Psoas muscle (tissue), 8 donors: ENCODE measurements at regions of chr19 and their contacts with region 1.

Region 1: DNA sequence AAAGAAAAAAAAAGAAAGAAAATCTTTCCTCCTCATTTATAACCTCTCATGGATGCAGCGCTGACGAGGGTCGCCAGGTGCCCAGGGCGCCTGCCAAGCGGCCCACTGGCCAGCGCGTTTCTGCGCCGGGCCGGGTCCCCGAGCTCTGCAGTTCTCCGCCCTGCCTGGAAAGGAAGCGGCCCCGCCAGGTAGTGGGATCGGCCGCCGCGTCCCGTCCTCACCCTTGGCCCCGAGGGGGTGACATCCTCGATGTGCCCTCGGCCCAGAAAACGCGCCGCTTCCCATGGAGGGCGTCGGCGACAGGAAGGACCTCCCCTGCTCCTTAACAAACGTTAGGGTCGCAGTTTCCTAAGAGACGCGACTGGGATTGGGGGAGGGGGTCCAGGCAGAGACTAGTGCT is 56.9 kb downstream of the ZNF726 start:
- DNase-seq: no peak
- ATAC-seq: no peak
- H3K4me3 ChIP-seq: no peak overlapping the region
- H3K27ac ChIP-seq: no peak overlapping the region
- H3K4me1 ChIP-seq: no peaks in the 10 kb centered on the region
- H3K27me3 ChIP-seq: peaks cover 3 to 22% (median 9%) of the 10 kb centered on the region in 3 donors
- CTCF ChIP-seq: no peak

Region 2: DNA sequence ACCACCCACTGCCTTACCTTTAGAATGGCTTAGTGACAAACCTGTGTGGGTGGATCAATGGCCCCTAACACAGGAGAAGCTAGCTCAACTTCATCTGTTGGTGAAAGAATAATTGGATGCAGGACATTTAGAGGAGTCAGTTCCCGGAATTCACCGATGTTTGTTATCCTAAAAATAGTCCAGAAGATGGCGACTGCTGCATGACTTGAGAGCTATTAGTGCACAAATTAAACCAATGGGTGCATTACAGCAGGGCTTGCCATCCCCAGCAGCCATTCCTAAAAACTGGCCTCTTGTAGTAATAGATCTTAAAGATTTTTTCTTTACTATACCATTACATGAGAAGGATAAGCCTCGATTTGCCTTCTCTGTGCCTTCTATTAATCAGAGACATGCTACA is 103.7 kb before region 1 on chr19:
- intact Hi-C with region 1: loop called (anchors 2 kb)
- DNase-seq: no peak
- ATAC-seq: no peak
- H3K4me3 ChIP-seq: no peak overlapping the region
- H3K27ac ChIP-seq: no peak overlapping the region
- H3K4me1 ChIP-seq: no peaks in the 10 kb centered on the region
- H3K27me3 ChIP-seq: no peaks in the 10 kb centered on the region
- CTCF ChIP-seq: no peak

Region 3: DNA sequence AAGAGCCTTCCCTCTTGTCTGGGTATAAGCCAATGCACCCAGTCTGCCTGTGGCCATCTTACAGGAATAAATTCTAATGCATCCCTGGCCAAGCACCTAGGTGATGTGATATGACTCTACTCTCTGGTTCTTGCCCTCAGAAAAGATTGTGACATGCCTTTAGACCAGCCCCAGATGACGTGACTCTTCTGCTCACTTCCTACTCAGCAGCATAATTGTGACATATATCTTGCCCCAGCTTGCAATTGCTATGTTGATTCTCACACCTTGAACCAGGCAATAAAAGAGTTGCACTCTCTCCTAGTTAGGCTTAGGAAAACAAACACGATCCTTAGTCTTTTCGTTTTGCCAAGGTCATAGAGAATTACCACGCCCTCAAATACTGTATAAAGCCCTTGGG is 70.2 kb before region 1 on chr19:
- intact Hi-C with region 1: no loop called
- DNase-seq: no peak
- ATAC-seq: no peak
- H3K4me3 ChIP-seq: no peak overlapping the region
- H3K27ac ChIP-seq: no peak overlapping the region
- H3K4me1 ChIP-seq: no peaks in the 10 kb centered on the region
- H3K27me3 ChIP-seq: peaks cover 0 to 6% (median 0%) of the 10 kb centered on the region in 3 donors
- CTCF ChIP-seq: no peak